B cell (primary cell): ENCODE measurements at regions of chr10 and their contacts with region 1.

Region 1: GRCh38 chr10:22682237-22683139 is 31.9 kb downstream of the PIP4K2A start:
- DNase-seq: peak; percentile 46
- ATAC-seq: peak; percentile 22
- H3K4me3 ChIP-seq: no peak overlapping the region
- H3K4me3 Mint-ChIP-seq: peak overlapping the region; percentile 72
- H3K27ac ChIP-seq: peak overlapping the region; percentile 19 to 82
- H3K27ac Mint-ChIP-seq: peak overlapping the region; percentile 77
- H3K4me1 ChIP-seq: peaks cover 38 to 43% of the 10 kb centered on the region in 2 donors
- H3K4me1 Mint-ChIP-seq: peaks cover 78% of the 10 kb centered on the region
- H3K27me3 ChIP-seq: no peaks in the 10 kb centered on the region
- H3K27me3 Mint-ChIP-seq: no peaks in the 10 kb centered on the region
- CTCF ChIP-seq: no peak

Region 2: DNA sequence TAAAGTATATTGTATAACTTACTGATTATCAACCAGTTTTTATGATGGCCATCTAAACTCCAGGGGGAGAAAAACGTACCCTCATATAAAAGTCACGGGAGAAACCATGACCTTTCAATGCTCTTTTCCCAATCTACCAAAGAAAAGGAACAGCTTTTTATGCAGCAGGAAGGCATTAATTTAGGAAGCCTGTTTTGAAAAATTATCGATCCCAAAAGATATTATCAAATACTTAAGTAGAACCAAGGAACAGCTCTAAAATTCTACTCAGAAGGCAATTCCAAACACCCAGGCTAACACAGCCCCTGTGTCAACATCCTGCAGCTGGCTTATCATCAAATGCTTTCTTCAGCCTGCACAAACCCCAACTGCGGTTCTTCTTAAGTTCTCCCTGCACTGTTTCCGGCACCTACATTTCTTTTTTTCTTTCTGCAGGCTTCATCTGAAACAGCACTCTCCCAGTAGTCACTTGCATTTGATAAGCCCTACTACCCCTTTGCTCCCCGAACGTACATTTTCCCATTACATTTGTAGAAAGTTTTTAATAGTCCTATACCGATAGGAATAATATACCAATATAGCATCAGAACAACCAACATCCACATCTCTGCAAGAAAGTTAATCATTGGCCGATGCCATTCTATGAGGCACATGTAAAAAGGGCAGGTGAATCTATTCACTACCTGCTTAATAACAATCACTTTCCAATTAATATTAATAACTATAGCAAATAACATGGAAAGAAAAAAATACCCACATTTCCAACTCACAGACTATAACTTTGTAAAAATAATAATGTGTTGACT is 16.0 kb before region 1 on chr10:
- CTCF ChIA-PET with region 1: no interaction called
- POLR2A ChIA-PET with region 1: interaction called, 6 read pairs
- intact Hi-C with region 1: loop called (anchors 2 kb)
- DNase-seq: peak; percentile 45
- ATAC-seq: peak; percentile 76
- H3K4me3 ChIP-seq: peak overlapping the region in 3 of 5 experiments; percentile 5 to 30 (median 15)
- H3K4me3 Mint-ChIP-seq: peak overlapping the region; percentile 76
- H3K27ac ChIP-seq: peak overlapping the region in 1 of 2 donors; percentile 59
- H3K27ac Mint-ChIP-seq: peak overlapping the region; percentile 56
- H3K4me1 ChIP-seq: peaks cover 22 to 38% of the 10 kb centered on the region in 2 donors
- H3K4me1 Mint-ChIP-seq: peaks cover 62% of the 10 kb centered on the region
- H3K27me3 ChIP-seq: no peaks in the 10 kb centered on the region
- H3K27me3 Mint-ChIP-seq: no peaks in the 10 kb centered on the region
- CTCF ChIP-seq: no peak

Region 3: GRCh38 chr10:22704471-22704911 is 22.0 kb after region 1 on chr10:
- CTCF ChIA-PET with region 1: interaction called, 4 read pairs
- POLR2A ChIA-PET with region 1: no interaction called
- intact Hi-C with region 1: loop called (anchors 2 kb)
- DNase-seq: peak; percentile 61
- ATAC-seq: peak; percentile 70
- H3K4me3 ChIP-seq: peak overlapping the region in 2 of 5 experiments; percentile 12 to 16
- H3K4me3 Mint-ChIP-seq: peak overlapping the region; percentile 79
- H3K27ac ChIP-seq: peak overlapping the region; percentile 25 to 57
- H3K27ac Mint-ChIP-seq: peak overlapping the region; percentile 91
- H3K4me1 ChIP-seq: peaks cover 79 to 80% of the 10 kb centered on the region in 2 donors
- H3K4me1 Mint-ChIP-seq: peaks cover 90% of the 10 kb centered on the region
- H3K27me3 ChIP-seq: no peaks in the 10 kb centered on the region
- H3K27me3 Mint-ChIP-seq: no peaks in the 10 kb centered on the region
- CTCF ChIP-seq: no peak

Region 4: GRCh38 chr10:22723343-22723779 is 40.9 kb after region 1 on chr10:
- CTCF ChIA-PET with region 1: no interaction called
- POLR2A ChIA-PET with region 1: no interaction called
- intact Hi-C with region 1: no loop called
- DNase-seq: peak; percentile 86
- ATAC-seq: peak; percentile 93
- H3K4me3 ChIP-seq: peak overlapping the region in 3 of 5 experiments; percentile 21 to 50 (median 29)
- H3K4me3 Mint-ChIP-seq: peak overlapping the region; percentile 88
- H3K27ac ChIP-seq: no peak overlapping the region
- H3K27ac Mint-ChIP-seq: peak overlapping the region; percentile 85
- H3K4me1 ChIP-seq: peaks cover 31 to 38% of the 10 kb centered on the region in 2 donors
- H3K4me1 Mint-ChIP-seq: peaks cover 58% of the 10 kb centered on the region
- H3K27me3 ChIP-seq: no peaks in the 10 kb centered on the region
- H3K27me3 Mint-ChIP-seq: no peaks in the 10 kb centered on the region
- CTCF ChIP-seq: no peak

Region 5: GRCh38 chr10:22737587-22737986 is 55.1 kb after region 1 on chr10:
- CTCF ChIA-PET with region 1: no interaction called
- POLR2A ChIA-PET with region 1: no interaction called
- intact Hi-C with region 1: no loop called
- DNase-seq: no peak
- ATAC-seq: no peak
- H3K4me3 ChIP-seq: no peak overlapping the region
- H3K4me3 Mint-ChIP-seq: no peak overlapping the region
- H3K27ac ChIP-seq: no peak overlapping the region
- H3K27ac Mint-ChIP-seq: no peak overlapping the region
- H3K4me1 ChIP-seq: peaks cover 8 to 9% of the 10 kb centered on the region in 2 donors
- H3K4me1 Mint-ChIP-seq: peaks cover 8% of the 10 kb centered on the region
- H3K27me3 ChIP-seq: peaks cover 0 to 3% (median 0%) of the 10 kb centered on the region in 4 experiments
- H3K27me3 Mint-ChIP-seq: peaks cover 3% of the 10 kb centered on the region
- CTCF ChIP-seq: no peak

Region 6: DNA sequence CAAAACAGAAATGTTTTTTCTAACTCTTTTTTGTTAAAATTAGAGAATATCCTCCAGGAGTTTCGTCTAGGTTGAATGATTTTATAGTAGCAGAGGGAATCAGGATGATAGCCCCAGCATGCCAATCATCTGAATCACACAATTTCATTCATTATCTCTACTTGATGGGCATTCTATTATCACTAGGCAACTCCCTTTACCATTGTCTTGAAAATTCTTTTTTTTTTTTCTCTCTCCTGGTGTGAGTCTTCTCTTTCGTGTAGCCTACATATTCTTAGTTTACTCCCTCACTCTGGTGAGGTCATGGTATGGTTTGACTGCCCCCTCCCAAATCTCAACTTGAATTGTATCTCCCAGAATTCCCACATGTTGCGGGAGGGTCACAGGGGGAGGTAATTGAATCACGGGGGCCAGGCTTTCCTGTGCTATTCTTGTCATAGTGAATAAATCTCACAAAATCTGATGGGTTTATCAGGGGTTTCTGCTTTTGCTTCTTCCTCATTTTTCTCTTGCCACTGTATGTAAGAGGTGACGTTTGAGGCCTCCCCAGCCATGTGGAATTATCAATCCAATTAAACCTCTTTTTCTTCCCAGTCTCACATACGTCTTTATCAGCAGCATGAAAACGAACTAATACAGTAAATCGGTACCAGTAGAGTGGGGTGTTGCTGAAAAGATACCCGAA is 861.4 kb after region 1 on chr10:
- CTCF ChIA-PET with region 1: no interaction called
- POLR2A ChIA-PET with region 1: no interaction called
- intact Hi-C with region 1: no loop called
- DNase-seq: no peak
- ATAC-seq: no peak
- H3K4me3 ChIP-seq: no peak overlapping the region
- H3K4me3 Mint-ChIP-seq: no peak overlapping the region
- H3K27ac ChIP-seq: no peak overlapping the region
- H3K27ac Mint-ChIP-seq: no peak overlapping the region
- H3K4me1 ChIP-seq: peaks cover 9 to 16% of the 10 kb centered on the region in 2 donors
- H3K4me1 Mint-ChIP-seq: peaks cover 27% of the 10 kb centered on the region
- H3K27me3 ChIP-seq: no peaks in the 10 kb centered on the region
- H3K27me3 Mint-ChIP-seq: no peaks in the 10 kb centered on the region
- CTCF ChIP-seq: no peak